ENCODE measurements at regions of chr11 and their contacts with region 1.

Region 1: GRCh38 chr11:15074206-15075161 is 1.1 kb downstream of the CALCB start:
- DNase-seq: peak; percentile 83
- H3K4me3 ChIP-seq: peak overlapping the region; percentile 50 to 57
- H3K27ac ChIP-seq: no peak overlapping the region; a peak in 1 of 4 replicates
- H3K4me1 ChIP-seq: peaks cover 0 to 15% of the 10 kb centered on the region in 2 experiments; a peak in 1 of 4 replicates
- H3K27me3 ChIP-seq: peaks cover 17% of the 10 kb centered on the region
- CTCF ChIP-seq: peak; percentile 70
- EP300 ChIP-seq: no peak
- RAD21 ChIP-seq: peak; percentile 83

Region 2: DNA sequence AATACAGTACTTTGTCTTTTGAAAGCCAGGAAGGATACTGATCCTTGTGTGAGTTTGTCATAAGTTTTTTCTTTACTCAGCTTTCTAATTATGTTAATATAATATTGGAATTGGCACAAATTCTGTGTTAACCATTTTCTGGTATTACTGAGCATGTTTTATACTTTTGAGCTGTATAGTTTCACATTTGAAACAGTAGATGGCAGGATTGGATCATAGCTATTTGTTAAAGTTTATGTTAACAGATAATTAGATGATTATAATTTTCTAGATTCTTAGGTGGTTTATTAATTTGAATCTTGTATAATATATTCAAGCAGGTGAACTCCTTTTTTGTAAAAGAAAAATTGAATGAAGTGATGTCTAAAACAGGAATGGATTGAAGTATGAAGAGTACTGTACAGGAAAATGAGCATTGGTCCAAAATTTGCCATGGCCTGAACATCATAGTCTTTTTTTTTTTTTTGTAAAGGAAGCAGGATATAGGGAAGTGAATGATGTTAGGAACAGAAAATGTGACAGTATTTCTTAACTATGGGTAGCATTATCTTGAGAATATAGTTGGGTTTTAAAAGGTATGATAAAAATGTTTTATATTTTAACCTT is 284.5 kb before region 1 on chr11:
- CTCF ChIA-PET with region 1: interaction called, 28 read pairs
- POLR2A ChIA-PET with region 1: no interaction called
- DNase-seq: no peak
- H3K4me3 ChIP-seq: no peak overlapping the region
- H3K27ac ChIP-seq: no peak overlapping the region
- H3K4me1 ChIP-seq: no peaks in the 10 kb centered on the region; a peak in 1 of 4 replicates
- H3K27me3 ChIP-seq: no peaks in the 10 kb centered on the region
- CTCF ChIP-seq: peak; percentile 75
- EP300 ChIP-seq: no peak
- RAD21 ChIP-seq: peak; percentile 61

Region 3: DNA sequence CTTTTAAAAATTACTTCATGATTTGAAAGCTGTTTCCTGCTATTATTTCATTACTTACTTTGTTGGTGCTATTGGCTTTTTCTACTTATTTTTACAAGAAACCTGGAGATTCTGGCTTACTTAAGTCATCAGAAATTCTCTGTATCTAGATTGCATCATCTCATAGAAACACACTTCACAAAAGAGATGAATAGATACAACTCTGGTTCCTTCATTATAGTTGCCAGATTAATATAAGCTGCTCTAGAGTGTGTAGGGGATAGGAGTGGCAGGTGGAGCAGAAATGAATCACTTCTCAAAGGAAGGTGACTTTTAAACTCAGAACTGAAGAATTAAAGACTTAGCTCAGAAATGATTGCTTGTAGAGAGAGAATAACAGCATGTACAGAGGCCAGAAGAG is 202.5 kb before region 1 on chr11:
- CTCF ChIA-PET with region 1: no interaction called
- POLR2A ChIA-PET with region 1: no interaction called
- DNase-seq: no peak
- H3K4me3 ChIP-seq: no peak overlapping the region
- H3K27ac ChIP-seq: no peak overlapping the region
- H3K4me1 ChIP-seq: no peaks in the 10 kb centered on the region
- H3K27me3 ChIP-seq: no peaks in the 10 kb centered on the region
- CTCF ChIP-seq: no peak
- EP300 ChIP-seq: no peak
- RAD21 ChIP-seq: no peak

Region 4: GRCh38 chr11:14927146-14927545 is 147.3 kb before region 1 on chr11:
- CTCF ChIA-PET with region 1: interaction called, 11 read pairs
- POLR2A ChIA-PET with region 1: no interaction called
- DNase-seq: no peak
- H3K4me3 ChIP-seq: no peak overlapping the region
- H3K27ac ChIP-seq: no peak overlapping the region
- H3K4me1 ChIP-seq: no peaks in the 10 kb centered on the region
- H3K27me3 ChIP-seq: no peaks in the 10 kb centered on the region
- CTCF ChIP-seq: no peak
- EP300 ChIP-seq: no peak
- RAD21 ChIP-seq: no peak

Region 5: DNA sequence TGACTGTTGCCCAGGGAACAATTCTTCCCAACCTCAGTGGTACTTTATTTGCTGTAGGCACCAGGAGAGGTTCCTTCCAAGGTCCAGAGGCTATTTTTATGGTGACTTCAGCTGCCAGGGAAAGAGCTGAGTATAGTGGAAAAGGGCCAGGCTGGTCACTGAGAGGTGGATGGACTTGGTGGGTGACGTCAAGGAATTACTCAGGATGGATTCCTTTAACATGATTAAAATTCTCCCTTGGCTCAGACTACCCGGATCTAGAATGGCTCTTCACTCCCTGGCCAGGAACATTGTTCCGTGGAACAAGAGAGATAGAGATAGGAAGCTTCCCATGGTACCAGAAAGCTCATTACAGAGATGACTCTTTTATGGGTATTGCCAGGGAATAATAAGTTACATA is 93.6 kb before region 1 on chr11:
- CTCF ChIA-PET with region 1: interaction called, 126 read pairs
- POLR2A ChIA-PET with region 1: no interaction called
- DNase-seq: no peak
- H3K4me3 ChIP-seq: no peak overlapping the region
- H3K27ac ChIP-seq: no peak overlapping the region
- H3K4me1 ChIP-seq: no peaks in the 10 kb centered on the region; a peak in 1 of 4 replicates
- H3K27me3 ChIP-seq: peaks cover 4% of the 10 kb centered on the region; the same call in 1 of the 2 replicates
- CTCF ChIP-seq: no peak
- EP300 ChIP-seq: no peak
- RAD21 ChIP-seq: no peak

Region 6: GRCh38 chr11:15059132-15059915 is 15.2 kb before region 1 on chr11:
- CTCF ChIA-PET with region 1: interaction called, 33 read pairs
- POLR2A ChIA-PET with region 1: no interaction called
- DNase-seq: no peak
- H3K4me3 ChIP-seq: no peak overlapping the region
- H3K27ac ChIP-seq: no peak overlapping the region
- H3K4me1 ChIP-seq: no peaks in the 10 kb centered on the region
- H3K27me3 ChIP-seq: no peaks in the 10 kb centered on the region
- CTCF ChIP-seq: no peak
- EP300 ChIP-seq: no peak
- RAD21 ChIP-seq: no peak

Region 7: GRCh38 chr11:15101072-15101709 is 26.7 kb after region 1 on chr11:
- CTCF ChIA-PET with region 1: interaction called, 16 read pairs
- POLR2A ChIA-PET with region 1: no interaction called
- DNase-seq: peak; percentile 73
- H3K4me3 ChIP-seq: no peak overlapping the region
- H3K27ac ChIP-seq: no peak overlapping the region
- H3K4me1 ChIP-seq: no peaks in the 10 kb centered on the region; a peak in 1 of 4 replicates
- H3K27me3 ChIP-seq: no peaks in the 10 kb centered on the region
- CTCF ChIP-seq: peak; percentile 95
- EP300 ChIP-seq: no peak
- RAD21 ChIP-seq: peak; percentile 90

Measured in SK-N-SH (cell line).